PC-3 (cell line): ENCODE measurements at regions of chr3 and their contacts with region 1.

Region 1: GRCh38 chr3:19972051-19972454 is 25.2 kb downstream of the RAB5A start:
- DNase-seq: peak; percentile 95
- ATAC-seq: peak; percentile 89
- H3K4me3 ChIP-seq: no peak overlapping the region
- H3K27ac ChIP-seq: no peak overlapping the region
- H3K4me1 ChIP-seq: peaks cover 11% of the 10 kb centered on the region
- H3K27me3 ChIP-seq: no peaks in the 10 kb centered on the region
- CTCF ChIP-seq: no peak

Region 2: GRCh38 chr3:19769694-19770093 is 202.4 kb before region 1 on chr3:
- CTCF ChIA-PET with region 1: no interaction called
- POLR2A ChIA-PET with region 1: no interaction called
- intact Hi-C with region 1: no loop called
- DNase-seq: no peak
- ATAC-seq: no peak
- H3K4me3 ChIP-seq: no peak overlapping the region
- H3K27ac ChIP-seq: no peak overlapping the region
- H3K4me1 ChIP-seq: no peaks in the 10 kb centered on the region
- H3K27me3 ChIP-seq: no peaks in the 10 kb centered on the region
- CTCF ChIP-seq: no peak

Region 3: GRCh38 chr3:20130106-20130505 is 158.1 kb after region 1 on chr3:
- CTCF ChIA-PET with region 1: no interaction called
- POLR2A ChIA-PET with region 1: interaction called, 24 read pairs
- intact Hi-C with region 1: no loop called
- DNase-seq: no peak
- ATAC-seq: no peak
- H3K4me3 ChIP-seq: no peak overlapping the region
- H3K27ac ChIP-seq: no peak overlapping the region
- H3K4me1 ChIP-seq: no peaks in the 10 kb centered on the region
- H3K27me3 ChIP-seq: no peaks in the 10 kb centered on the region
- CTCF ChIP-seq: no peak